Activated CD4-positive, alpha-beta memory T cell treated with anti-CD3 and anti-CD28 coated beads, Interleukin-2, amount 10 ng/mL, durations not matched to agents 7 days and 5 days (primary cell): ENCODE measurements at regions of chr16 and their contacts with region 1.

Region 1: DNA sequence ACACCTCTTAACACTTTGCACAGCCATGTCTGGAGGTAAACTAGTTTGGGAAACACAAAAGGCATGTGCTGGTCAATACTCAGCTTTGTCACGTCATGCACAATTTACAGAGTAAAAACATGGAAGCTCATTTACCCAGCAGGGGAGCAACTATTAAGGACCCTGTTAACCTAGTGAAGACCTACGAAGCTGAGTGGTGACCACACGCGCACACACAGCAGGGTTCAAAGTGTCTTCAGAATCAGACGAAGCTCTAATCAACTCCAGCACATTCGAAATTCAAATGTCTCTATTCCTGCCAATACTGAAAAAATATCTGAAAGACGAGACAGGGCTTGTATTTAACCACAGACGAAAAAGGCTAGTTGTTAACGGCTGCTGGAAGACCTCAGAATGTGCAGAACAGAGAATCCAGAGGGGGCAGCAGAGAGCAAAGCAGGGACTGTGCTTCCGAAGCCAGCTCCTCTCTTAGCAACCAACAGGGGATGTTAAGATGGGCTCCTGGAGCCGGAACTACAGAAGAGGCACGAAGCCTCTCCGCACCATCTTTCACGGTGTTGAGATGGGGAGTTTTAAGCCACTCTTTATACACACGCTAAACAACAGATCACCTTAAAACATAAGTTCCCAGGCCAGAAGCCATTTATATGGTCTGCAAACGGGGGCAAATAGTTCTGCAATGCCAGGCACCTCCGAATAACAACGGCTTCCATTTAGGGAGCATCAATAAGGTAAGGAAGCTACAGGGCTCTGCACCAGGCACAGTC is 45.7 kb downstream of the CMTM4 start:
- DNase-seq: peak; percentile 82
- H3K4me3 Mint-ChIP-seq: peak overlapping the region; percentile 38
- H3K27ac Mint-ChIP-seq: no peak overlapping the region
- H3K4me1 Mint-ChIP-seq: peaks cover 16% of the 10 kb centered on the region
- H3K27me3 Mint-ChIP-seq: peaks cover 6% of the 10 kb centered on the region

Region 2: GRCh38 chr16:66618588-66619375 is 32.1 kb before region 1 on chr16:
- CTCF ChIA-PET with region 1: interaction called, 10 read pairs
- POLR2A ChIA-PET with region 1: no interaction called
- DNase-seq: no peak
- H3K4me3 Mint-ChIP-seq: no peak overlapping the region
- H3K27ac Mint-ChIP-seq: no peak overlapping the region
- H3K4me1 Mint-ChIP-seq: peaks cover 6% of the 10 kb centered on the region
- H3K27me3 Mint-ChIP-seq: no peaks in the 10 kb centered on the region

Region 3: DNA sequence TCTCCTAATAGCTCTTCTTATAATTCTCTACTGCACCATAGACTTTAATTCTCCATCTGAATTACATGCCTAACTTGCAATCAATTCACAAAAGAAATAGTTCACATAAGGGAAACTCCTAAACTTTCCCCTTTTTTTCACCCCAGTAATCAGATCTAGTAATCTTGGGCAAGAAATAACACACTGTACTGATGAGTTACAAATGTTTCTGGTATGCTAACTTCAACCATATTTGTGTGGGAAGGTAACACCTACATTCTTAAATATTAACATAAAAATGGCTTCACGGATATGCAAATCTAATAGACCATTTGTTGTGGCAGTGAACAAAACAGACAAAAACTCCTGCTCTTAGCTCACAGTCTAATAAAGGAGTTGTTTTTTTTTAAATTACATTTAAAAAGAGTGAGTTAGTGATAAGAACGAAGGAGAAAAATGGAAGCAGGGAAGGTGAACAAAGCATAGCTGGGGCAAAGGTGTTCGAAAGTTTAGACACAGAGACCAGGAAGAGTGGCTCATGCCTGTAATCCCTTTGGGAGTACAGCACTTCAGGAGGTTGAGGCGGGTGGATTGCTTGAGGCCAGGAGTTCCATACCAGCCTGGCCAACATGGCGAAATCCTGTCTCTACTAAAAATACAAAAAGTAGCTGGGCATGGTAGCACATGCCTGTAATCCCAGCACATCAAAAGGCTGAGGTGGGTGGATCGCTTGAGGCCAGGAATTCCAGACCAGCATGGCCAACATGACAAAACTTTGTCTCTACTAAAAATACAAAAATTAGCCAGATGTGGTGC is 11.6 kb before region 1 on chr16:
- CTCF ChIA-PET with region 1: interaction called, 17 read pairs
- POLR2A ChIA-PET with region 1: no interaction called
- DNase-seq: no peak
- H3K4me3 Mint-ChIP-seq: no peak overlapping the region
- H3K27ac Mint-ChIP-seq: no peak overlapping the region
- H3K4me1 Mint-ChIP-seq: no peaks in the 10 kb centered on the region
- H3K27me3 Mint-ChIP-seq: peaks cover 2% of the 10 kb centered on the region

Region 4: DNA sequence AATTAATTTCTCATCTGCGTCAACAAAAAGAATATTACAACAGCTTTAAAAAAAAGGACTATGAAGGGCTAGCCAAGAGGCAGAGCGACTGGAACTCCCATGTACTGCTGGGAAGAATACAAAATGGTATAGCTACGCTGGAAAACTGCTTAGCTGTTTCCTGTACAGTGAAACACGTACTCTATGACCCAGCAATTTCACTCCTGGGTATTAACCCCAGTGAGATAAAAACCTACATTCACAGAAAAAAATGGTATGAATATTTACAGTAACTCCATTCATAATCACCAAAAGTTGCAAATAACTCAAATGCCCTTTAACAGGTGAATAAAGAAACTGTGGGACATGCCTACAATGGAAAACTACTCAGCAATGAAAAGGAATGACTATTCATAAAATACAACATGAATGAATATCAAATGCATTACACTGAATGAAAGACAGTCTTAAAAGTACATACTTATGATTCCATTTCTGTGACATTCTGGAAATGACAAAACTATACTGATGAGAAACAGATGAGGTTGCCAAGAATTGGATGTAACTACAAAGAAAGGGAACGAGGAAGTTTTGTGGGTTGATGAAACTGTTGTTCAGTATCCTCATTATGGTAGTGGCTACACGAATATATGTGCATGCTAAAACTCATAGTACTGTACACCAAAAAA is 18.0 kb after region 1 on chr16:
- CTCF ChIA-PET with region 1: interaction called, 37 read pairs
- POLR2A ChIA-PET with region 1: no interaction called
- DNase-seq: no peak
- H3K4me3 Mint-ChIP-seq: no peak overlapping the region
- H3K27ac Mint-ChIP-seq: no peak overlapping the region
- H3K4me1 Mint-ChIP-seq: no peaks in the 10 kb centered on the region
- H3K27me3 Mint-ChIP-seq: no peaks in the 10 kb centered on the region

Region 5: GRCh38 chr16:66728117-66728787 is 77.4 kb after region 1 on chr16:
- CTCF ChIA-PET with region 1: no interaction called
- POLR2A ChIA-PET with region 1: no interaction called
- DNase-seq: no peak
- H3K4me3 Mint-ChIP-seq: no peak overlapping the region
- H3K27ac Mint-ChIP-seq: no peak overlapping the region
- H3K4me1 Mint-ChIP-seq: peaks cover 2% of the 10 kb centered on the region
- H3K27me3 Mint-ChIP-seq: no peaks in the 10 kb centered on the region